Activated naive CD4-positive, alpha-beta T cell treated with anti-CD3 and anti-CD28 coated beads for 36 hours (primary cell): ENCODE measurements at regions of chr17 and their contacts with region 1.

Region 1: DNA sequence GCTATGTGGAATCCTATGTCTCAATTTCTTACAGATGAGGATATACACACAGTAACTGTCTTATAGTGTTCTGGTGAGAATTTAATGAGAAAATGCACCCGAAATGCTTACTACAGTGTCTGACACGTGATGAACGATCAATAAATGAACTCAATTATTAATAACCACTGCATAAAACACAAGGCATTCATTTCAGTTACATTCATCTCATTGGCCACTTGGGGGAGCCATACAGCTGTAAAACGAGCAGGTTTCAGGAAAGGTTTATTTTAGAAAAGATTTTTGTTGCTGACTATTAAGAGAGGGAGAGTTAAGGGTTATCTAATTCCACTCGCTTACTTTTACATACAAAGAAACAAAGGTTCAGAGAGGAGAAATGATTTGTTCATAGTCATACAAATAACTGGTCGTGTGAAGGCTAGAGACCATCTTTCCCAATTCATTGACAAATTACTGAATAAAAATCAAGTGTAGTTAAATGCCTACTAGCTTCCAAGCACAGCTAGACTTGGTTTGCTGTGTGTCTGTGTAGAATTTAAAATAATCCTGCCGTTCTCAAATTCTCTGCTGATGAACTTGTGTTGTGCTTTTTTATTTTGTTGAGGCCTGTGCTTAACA is 160.1 kb downstream of the MAP2K4 start:
- DNase-seq: peak; percentile 42
- H3K4me3 Mint-ChIP-seq: no peak overlapping the region
- H3K27ac Mint-ChIP-seq: no peak overlapping the region
- H3K4me1 Mint-ChIP-seq: no peaks in the 10 kb centered on the region
- H3K27me3 Mint-ChIP-seq: no peaks in the 10 kb centered on the region

Region 2: GRCh38 chr17:12744298-12744697 is 563.5 kb after region 1 on chr17:
- CTCF ChIA-PET with region 1: no interaction called
- intact Hi-C with region 1: loop called (anchors 5 kb)
- DNase-seq: no peak
- H3K4me3 Mint-ChIP-seq: no peak overlapping the region
- H3K27ac Mint-ChIP-seq: no peak overlapping the region
- H3K4me1 Mint-ChIP-seq: no peaks in the 10 kb centered on the region
- H3K27me3 Mint-ChIP-seq: peaks cover 3% of the 10 kb centered on the region

Region 3: DNA sequence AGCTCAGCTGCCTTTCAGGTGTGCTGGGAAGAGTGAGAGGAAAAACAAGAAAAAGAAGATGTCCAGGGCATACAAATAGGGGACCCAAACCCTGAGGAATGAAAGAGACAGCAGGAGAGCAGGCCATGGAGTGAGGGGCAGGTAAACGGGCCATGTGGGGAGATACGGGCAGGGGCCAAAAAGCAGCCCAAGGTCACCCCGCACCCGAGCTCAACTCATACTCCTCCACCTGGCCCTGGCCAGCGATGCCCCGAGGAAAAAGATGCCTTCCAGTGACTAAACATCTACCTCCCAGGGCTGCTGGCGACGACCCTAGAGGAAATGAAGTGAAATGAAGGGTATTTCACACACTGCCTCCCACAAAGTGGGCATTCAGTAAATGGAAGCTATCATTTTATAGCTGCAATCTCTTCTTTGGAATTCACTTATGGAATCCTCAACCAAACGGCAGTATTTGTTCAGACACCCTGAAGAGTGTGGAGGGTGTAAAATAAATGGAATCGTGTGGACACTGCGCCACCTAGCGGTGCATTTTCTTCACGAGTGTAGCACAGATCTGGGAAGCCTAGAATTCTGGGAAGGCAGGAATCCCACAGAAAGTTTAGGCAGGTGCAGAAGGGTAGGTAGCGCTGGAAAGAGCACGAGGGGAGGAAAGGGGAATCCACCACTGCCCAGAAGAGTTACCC is 822.2 kb after region 1 on chr17:
- CTCF ChIA-PET with region 1: no interaction called
- intact Hi-C with region 1: loop called (anchors 1 kb)
- DNase-seq: peak; percentile 68
- H3K4me3 Mint-ChIP-seq: no peak overlapping the region
- H3K27ac Mint-ChIP-seq: no peak overlapping the region
- H3K4me1 Mint-ChIP-seq: peaks cover 2% of the 10 kb centered on the region
- H3K27me3 Mint-ChIP-seq: no peaks in the 10 kb centered on the region